Ovary (tissue), 10 donors: ENCODE measurements at regions of chr2 and their contacts with region 1.

Region 1: DNA sequence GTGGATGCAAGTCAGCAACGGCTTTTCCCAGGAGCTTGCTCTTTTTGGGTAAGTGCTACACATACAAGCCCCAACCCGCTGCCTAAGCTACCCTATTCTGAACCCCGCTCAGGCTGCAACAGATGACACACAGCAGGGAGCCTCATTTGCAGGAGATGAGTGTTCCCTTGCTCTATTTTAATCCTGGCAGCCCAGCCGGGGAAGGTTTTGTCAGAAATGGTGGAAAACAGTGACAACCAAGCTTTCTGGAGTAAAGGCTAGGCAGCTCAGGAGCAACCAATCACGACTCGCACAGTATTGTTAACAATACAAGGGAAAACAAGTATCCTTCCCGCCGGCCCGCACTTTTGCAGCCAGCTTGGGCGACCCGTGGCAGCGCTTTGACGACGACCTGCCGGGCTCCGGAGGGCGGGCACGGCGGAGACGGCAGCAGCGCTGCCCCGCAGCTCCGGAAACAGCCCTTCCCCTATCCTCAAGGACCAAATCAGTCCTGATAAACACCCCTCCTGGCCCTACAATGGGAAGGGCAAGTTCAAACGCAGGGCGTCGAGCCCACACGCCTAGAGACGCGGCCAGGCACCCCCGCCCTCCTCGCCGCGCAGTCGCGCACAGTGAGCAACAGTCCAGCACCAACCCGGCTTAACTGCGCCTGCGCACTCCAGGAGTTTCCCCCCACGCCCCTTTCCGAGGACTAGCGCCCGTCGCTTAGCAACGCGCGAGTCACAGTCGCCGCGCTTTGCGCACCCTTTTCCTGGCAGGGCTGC is 74.3 kb upstream of the TSPYL6 start:
- DNase-seq: peak; percentile 94 to 98 (median 96)
- H3K4me3 ChIP-seq: peak overlapping the region; percentile 59
- H3K27ac ChIP-seq: peak overlapping the region; percentile 16 to 74
- H3K4me1 ChIP-seq: peaks cover 3% of the 10 kb centered on the region
- H3K27me3 ChIP-seq: no peaks in the 10 kb centered on the region
- CTCF ChIP-seq: no peak
- EP300 ChIP-seq: peak; percentile 1
- POLR2A ChIP-seq: peak; percentile 88

Region 2: GRCh38 chr2:54503192-54503591 is 172.8 kb after region 1 on chr2:
- intact Hi-C with region 1: loop called in 1 of 4 experiments (anchors 10 kb)
- DNase-seq: peak in 2 of 5 donors; percentile 36 to 40
- H3K4me3 ChIP-seq: no peak overlapping the region
- H3K27ac ChIP-seq: no peak overlapping the region
- H3K4me1 ChIP-seq: peaks cover 31% of the 10 kb centered on the region
- H3K27me3 ChIP-seq: no peaks in the 10 kb centered on the region
- CTCF ChIP-seq: no peak
- EP300 ChIP-seq: no peak
- POLR2A ChIP-seq: no peak

Region 3: DNA sequence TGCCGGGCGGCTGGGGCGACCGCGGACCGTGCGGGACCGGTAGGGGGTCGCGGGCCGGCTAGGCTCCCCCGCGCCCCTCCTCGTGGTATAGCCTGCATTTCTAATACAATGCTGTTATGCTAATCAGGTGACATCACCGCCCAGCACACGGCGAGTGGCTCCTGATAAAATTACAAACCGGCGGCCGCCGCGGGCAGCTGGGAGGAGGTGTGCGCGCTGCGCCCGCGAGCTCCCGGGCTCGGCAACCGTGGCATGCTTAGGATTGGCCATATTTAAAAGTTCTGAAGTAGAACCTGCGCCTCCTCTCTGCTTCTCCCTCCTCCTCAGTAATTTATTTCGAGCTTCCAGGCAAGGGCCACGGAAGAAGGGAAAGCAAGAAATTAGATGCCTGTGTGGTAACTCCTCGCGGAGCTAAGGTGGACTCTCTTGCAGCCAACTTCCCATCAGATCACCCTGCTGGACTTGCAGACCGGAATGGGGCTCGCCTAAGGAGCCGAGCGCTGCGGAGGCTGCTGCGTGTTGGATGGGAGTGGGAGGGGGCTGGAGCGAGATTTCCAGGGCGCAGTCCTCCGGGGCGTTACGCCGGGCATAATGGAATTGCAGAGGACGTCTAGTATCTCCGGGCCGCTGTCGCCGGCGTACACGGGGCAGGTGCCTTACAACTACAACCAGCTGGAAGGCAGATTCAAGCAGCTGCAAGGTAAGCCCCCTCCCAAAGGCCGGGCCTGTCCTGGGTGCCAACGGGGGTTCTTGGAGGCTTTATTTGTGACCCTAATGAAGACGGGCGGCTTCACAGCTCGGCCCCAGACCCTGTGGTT is 228.1 kb after region 1 on chr2:
- intact Hi-C with region 1: no loop called
- DNase-seq: peak; percentile 23 to 55 (median 41)
- H3K4me3 ChIP-seq: peak overlapping the region; percentile 50
- H3K27ac ChIP-seq: peak overlapping the region; percentile 44 to 62
- H3K4me1 ChIP-seq: peaks cover 17% of the 10 kb centered on the region
- H3K27me3 ChIP-seq: no peaks in the 10 kb centered on the region
- CTCF ChIP-seq: no peak
- EP300 ChIP-seq: no peak
- POLR2A ChIP-seq: no peak

Region 4: GRCh38 chr2:55693181-55694134 is 1363.1 kb after region 1 on chr2 and contains the start of gene PNPT1:
- intact Hi-C with region 1: loop called in 1 of 4 experiments (anchors 5 kb)
- DNase-seq: peak; percentile 89 to 95 (median 91)
- H3K4me3 ChIP-seq: peak within 1 kb of the TSS; percentile 44
- H3K27ac ChIP-seq: peak within 1 kb of the TSS in 1 of 2 donors; percentile 26
- H3K4me1 ChIP-seq: peaks cover 5% of the 10 kb centered on the region
- H3K27me3 ChIP-seq: no peaks in the 10 kb centered on the region
- CTCF ChIP-seq: no peak
- EP300 ChIP-seq: no peak
- POLR2A ChIP-seq: peak; percentile 50
- total RNA-seq, gene PNPT1: 11.4 to 19.2 (median 17.5) TPM